HEK293 (cell line): ENCODE measurements at regions of chr13 and their contacts with region 1.

Region 1: DNA sequence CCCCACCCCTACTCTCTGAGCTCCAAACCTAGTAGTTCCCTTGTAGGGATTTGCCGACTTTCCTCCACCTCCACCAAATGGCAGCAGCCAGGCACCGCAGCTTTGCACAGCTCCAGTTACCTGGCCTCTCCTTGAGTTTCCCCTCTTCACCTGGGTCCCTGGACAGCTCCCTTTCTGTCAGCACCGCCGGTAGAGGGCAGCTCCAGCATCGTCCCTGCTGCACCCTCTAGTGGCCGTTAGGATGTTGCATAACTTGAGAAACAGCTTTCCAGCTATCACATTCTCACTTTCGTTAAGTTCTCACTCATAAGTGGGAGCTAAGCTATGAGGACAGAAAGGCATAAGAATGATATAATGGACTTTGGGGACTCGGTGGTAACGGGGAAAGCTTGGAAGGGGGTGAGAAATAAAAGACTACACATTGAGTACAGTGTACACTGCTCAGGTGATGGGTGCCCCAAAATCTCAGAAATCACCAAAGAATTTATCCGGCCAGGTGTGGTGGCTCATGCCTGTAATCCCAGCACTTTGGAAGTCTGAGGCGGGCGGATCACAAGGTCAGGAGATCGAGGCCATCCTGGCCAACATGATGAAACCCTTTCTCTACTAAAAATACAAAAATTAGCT is 60.4 kb upstream of the OLFM4 start:
- H3K4me3 ChIP-seq: no peak overlapping the region
- H3K27ac ChIP-seq: no peak overlapping the region
- H3K4me1 ChIP-seq: no peaks in the 10 kb centered on the region
- CTCF ChIP-seq: peak; percentile 92

Region 2: DNA sequence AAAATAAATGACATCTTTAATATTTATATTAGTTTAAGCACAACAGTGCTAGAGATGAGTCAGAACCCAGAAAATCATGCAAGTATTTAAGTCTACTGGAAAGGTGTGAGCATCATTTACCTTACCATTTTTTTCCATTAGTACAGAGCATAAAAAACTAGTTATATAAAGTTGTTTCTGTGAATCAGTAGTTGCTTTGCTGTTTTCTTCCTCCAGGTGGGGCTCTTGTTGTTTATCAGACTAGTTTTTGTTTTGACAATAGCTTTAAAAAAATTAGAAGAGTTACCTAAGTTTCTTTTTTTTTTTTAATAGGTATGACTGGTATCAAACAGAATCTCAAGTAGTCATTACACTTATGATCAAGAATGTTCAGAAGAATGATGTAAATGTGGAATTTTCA is 302.9 kb before region 1 on chr13:
- CTCF ChIA-PET with region 1: interaction called, 12 read pairs
- POLR2A ChIA-PET with region 1: no interaction called
- H3K4me3 ChIP-seq: no peak overlapping the region
- H3K27ac ChIP-seq: no peak overlapping the region
- H3K4me1 ChIP-seq: no peaks in the 10 kb centered on the region
- CTCF ChIP-seq: no peak

Region 3: GRCh38 chr13:52852444-52852843 is 115.7 kb before region 1 on chr13:
- CTCF ChIA-PET with region 1: no interaction called
- POLR2A ChIA-PET with region 1: no interaction called
- H3K4me3 ChIP-seq: no peak overlapping the region
- H3K27ac ChIP-seq: no peak overlapping the region
- H3K4me1 ChIP-seq: no peaks in the 10 kb centered on the region
- CTCF ChIP-seq: no peak

Region 4: DNA sequence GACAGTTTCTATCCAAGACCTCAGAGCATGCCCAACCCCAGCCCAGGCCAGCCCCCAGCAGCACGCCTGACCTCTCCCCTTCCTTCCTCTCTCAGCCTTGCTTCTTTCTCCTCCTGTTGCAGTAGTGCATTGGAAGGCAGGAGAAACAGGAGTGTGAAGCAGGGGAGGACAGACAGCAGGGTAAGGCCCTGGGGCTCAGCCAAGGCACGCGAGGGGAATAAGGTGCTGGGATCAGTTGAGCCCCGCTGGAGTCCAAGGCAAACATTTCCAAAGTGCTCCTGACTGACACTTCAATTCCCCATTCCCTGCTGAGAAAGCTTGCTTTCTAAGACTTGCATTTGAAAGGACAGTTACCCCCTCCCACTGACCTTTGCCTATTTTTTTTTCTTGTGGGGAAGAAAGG is 12.7 kb before region 1 on chr13:
- CTCF ChIA-PET with region 1: interaction called, 12 read pairs
- POLR2A ChIA-PET with region 1: no interaction called
- H3K4me3 ChIP-seq: no peak overlapping the region
- H3K27ac ChIP-seq: no peak overlapping the region
- H3K4me1 ChIP-seq: no peaks in the 10 kb centered on the region
- CTCF ChIP-seq: no peak

Region 5: DNA sequence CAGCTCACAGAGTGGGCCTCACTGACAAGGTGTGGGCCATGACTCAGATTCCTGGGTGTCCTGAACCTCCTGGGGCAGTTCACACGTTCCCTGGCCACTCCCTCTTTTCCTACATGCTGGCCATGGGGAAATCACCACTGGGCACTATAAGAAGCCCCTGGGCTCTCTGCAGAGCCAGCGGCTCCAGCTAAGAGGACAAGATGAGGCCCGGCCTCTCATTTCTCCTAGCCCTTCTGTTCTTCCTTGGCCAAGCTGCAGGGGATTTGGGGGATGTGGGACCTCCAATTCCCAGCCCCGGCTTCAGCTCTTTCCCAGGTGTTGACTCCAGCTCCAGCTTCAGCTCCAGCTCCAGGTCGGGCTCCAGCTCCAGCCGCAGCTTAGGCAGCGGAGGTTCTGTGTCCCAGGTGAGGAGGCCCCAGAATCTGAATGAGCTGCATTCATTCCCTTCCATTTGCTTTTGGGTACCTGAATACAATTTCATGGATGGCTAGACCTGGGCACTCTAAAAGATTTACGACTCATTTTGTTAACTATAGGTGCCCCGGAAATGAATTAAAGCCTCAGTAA is 60.5 kb after region 1 on chr13 and contains the start of gene OLFM4:
- CTCF ChIA-PET with region 1: interaction called, 12 read pairs
- POLR2A ChIA-PET with region 1: no interaction called
- H3K4me3 ChIP-seq: no peak within 1 kb of the TSS
- H3K27ac ChIP-seq: no peak within 1 kb of the TSS
- H3K4me1 ChIP-seq: no peaks in the 10 kb centered on the region
- CTCF ChIP-seq: no peak

Region 6: GRCh38 chr13:53198017-53198416 is 229.8 kb after region 1 on chr13:
- CTCF ChIA-PET with region 1: interaction called, 13 read pairs
- POLR2A ChIA-PET with region 1: no interaction called
- H3K4me3 ChIP-seq: no peak overlapping the region
- H3K27ac ChIP-seq: no peak overlapping the region
- H3K4me1 ChIP-seq: peaks cover 15% of the 10 kb centered on the region
- CTCF ChIP-seq: no peak; the same call in 1 of the 2 replicates